B cell (primary cell): ENCODE measurements at regions of chr11 and their contacts with region 1.

Region 1: DNA sequence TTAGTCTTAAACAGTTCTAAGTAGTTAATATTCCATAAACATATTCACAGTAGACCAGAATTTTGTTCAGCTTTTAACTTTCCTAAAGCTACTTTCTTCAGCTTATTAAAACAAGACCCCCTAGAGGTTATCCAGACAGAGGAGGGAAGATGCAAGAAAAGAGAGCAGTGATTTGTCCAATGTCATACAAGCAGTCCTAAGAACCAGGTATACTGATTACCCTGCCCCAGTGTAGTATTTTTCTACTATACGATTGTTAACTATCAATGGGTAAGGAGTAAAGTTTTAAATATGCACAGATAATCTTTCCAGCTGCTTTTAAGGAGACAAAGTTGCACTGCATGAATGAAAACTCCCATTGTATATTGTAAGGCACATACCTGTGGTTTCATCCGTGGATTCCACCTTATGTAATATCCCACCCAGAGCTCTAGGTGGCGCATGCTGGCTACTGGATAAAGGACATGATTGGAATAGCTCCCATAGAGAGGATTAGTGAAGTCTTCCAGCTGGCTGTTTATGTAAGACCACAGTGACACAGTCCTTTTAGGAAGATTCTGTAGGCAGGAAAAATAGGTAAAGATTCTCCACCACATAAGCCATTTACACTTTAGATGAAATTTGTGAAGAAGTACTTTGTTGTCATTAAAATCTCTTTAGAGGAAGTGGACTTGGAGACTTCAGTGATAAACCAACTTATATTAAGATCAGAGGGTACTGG is 45.6 kb downstream of the CEP57 start:
- DNase-seq: peak; percentile 67
- ATAC-seq: peak; percentile 90
- H3K4me3 ChIP-seq: no peak overlapping the region
- H3K4me3 Mint-ChIP-seq: no peak overlapping the region
- H3K27ac ChIP-seq: no peak overlapping the region
- H3K27ac Mint-ChIP-seq: no peak overlapping the region
- H3K4me1 ChIP-seq: no peaks in the 10 kb centered on the region
- H3K4me1 Mint-ChIP-seq: no peaks in the 10 kb centered on the region
- H3K27me3 ChIP-seq: no peaks in the 10 kb centered on the region
- H3K27me3 Mint-ChIP-seq: no peaks in the 10 kb centered on the region
- CTCF ChIP-seq: peak; percentile 92

Region 2: DNA sequence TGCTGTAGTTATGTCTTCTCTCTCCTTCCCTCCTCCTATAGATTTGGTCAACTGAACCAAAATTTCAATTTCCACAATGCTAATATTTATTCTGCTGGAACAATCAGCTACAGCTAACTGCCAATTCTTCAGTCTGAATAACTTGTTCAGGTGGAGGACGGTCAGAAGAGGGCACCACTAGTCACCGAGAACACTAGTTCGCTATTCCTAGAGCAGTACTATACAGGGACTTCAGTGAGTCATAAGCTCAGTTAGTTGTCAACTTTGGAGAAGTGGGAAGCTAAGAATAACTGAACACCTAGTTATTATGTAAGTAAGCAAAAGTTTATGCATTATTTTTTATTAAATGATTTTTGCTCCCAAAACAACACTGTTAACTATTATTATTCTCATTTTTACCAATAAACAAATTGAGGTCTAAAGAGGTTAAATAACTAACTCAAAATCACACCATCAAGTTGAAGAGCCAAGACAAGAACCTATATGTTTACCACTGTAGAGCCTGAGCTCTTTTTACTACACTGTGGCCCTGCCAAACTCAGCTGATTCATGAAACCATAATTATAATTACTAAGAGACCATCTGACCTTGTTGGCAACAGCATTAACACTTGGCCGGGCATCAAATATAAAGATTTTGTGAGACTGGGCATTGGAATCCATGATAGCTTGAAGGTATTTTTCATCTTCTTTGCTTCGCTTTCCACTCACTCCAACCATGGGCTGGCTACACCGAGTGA is 13.3 kb after region 1 on chr11:
- CTCF ChIA-PET with region 1: interaction called, 30 read pairs
- POLR2A ChIA-PET with region 1: no interaction called
- intact Hi-C with region 1: no loop called
- DNase-seq: peak; percentile 29
- ATAC-seq: no peak
- H3K4me3 ChIP-seq: no peak overlapping the region
- H3K4me3 Mint-ChIP-seq: no peak overlapping the region
- H3K27ac ChIP-seq: no peak overlapping the region
- H3K27ac Mint-ChIP-seq: peak overlapping the region; percentile 21
- H3K4me1 ChIP-seq: no peaks in the 10 kb centered on the region
- H3K4me1 Mint-ChIP-seq: no peaks in the 10 kb centered on the region
- H3K27me3 ChIP-seq: no peaks in the 10 kb centered on the region
- H3K27me3 Mint-ChIP-seq: no peaks in the 10 kb centered on the region
- CTCF ChIP-seq: no peak

Region 3: DNA sequence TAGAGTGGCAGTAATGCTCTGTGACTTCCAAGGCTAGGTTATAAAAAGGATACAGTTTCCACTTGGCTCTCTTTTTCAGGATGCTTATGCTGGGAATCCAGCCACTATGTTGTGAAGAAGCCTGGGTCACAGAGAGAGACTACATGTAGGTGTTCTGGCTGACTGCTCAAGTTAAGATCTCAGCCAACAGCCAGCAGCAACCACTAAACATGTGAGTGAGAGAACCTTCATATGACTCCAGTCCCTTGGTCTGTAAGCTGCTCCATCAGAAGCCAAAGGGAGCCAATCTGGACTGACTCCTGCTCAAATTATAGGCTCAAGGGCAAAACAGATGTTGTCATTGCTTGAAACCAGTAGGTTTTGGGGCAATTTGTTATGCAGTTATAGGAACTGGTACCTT is 344.4 kb after region 1 on chr11:
- CTCF ChIA-PET with region 1: no interaction called
- POLR2A ChIA-PET with region 1: no interaction called
- intact Hi-C with region 1: no loop called
- DNase-seq: no peak
- ATAC-seq: no peak
- H3K4me3 ChIP-seq: no peak overlapping the region
- H3K4me3 Mint-ChIP-seq: no peak overlapping the region
- H3K27ac ChIP-seq: no peak overlapping the region
- H3K27ac Mint-ChIP-seq: peak overlapping the region; percentile 23
- H3K4me1 ChIP-seq: peaks cover 8 to 11% of the 10 kb centered on the region in 2 donors
- H3K4me1 Mint-ChIP-seq: peaks cover 19% of the 10 kb centered on the region
- H3K27me3 ChIP-seq: no peaks in the 10 kb centered on the region
- H3K27me3 Mint-ChIP-seq: no peaks in the 10 kb centered on the region
- CTCF ChIP-seq: no peak

Region 4: GRCh38 chr11:96396637-96397036 is 560.7 kb after region 1 on chr11:
- CTCF ChIA-PET with region 1: interaction called, 97 read pairs
- POLR2A ChIA-PET with region 1: no interaction called
- intact Hi-C with region 1: loop called (anchors 1 kb)
- DNase-seq: no peak
- ATAC-seq: no peak
- H3K4me3 ChIP-seq: no peak overlapping the region
- H3K4me3 Mint-ChIP-seq: no peak overlapping the region
- H3K27ac ChIP-seq: no peak overlapping the region
- H3K27ac Mint-ChIP-seq: no peak overlapping the region
- H3K4me1 ChIP-seq: no peaks in the 10 kb centered on the region
- H3K4me1 Mint-ChIP-seq: no peaks in the 10 kb centered on the region
- H3K27me3 ChIP-seq: no peaks in the 10 kb centered on the region
- H3K27me3 Mint-ChIP-seq: peaks cover 2% of the 10 kb centered on the region
- CTCF ChIP-seq: no peak